ENCODE measurements at regions of chr2 and their contacts with region 1.

Region 1: GRCh38 chr2:82690757-82691411 is 1768.2 kb downstream of the SUCLG1 start:
- DNase-seq: no peak
- H3K4me3 ChIP-seq: no peak overlapping the region
- H3K27ac ChIP-seq: peak overlapping the region; percentile 13
- H3K4me1 ChIP-seq: no peaks in the 10 kb centered on the region
- H3K27me3 ChIP-seq: no peaks in the 10 kb centered on the region
- CTCF ChIP-seq: no peak

Region 2: DNA sequence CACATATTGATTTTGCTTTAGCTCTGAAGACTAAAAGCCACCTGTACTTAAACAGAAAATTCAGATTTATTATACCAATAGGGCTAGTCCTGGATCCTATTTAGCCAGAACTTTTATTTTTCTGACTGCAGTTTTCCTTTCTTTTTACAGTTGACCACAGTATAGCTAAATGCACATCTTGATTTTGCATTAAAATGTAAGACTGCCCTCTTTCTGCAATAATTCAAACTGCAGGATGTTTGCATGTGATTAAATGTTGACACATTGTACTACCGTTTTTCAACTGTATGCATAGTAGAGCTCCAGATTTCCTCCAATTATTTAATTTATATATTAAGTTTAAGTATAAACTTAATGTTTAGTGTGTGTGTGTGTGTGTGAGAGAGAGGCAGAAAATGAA is 505.3 kb after region 1 on chr2:
- intact Hi-C with region 1: loop called (anchors 10 kb)
- DNase-seq: no peak
- H3K4me3 ChIP-seq: no peak overlapping the region
- H3K27ac ChIP-seq: no peak overlapping the region
- H3K4me1 ChIP-seq: no peaks in the 10 kb centered on the region
- H3K27me3 ChIP-seq: no peaks in the 10 kb centered on the region
- CTCF ChIP-seq: peak; percentile 75

Measured in left ventricle myocardium inferior (tissue), 1 donor.